ENCODE measurements at regions of chr7 and their contacts with region 1.

Region 1: DNA sequence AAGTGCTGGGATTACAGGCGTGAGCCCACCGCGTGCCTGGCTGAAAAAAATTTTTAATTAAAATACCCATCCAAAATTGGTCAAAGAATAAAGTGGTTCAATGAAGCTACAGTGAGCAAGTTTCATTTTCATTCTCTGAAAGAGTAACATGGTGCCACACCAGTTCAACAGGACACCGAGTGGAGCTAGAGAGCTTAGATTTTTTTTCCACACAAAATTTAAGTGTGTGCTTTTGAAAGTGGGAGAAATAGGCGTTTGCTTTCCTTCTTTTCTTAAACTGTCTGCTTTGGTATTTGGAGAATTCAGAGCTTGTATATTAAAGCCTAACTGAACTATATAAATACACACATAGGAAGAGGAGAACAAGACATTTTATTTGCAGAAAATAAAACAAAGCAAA is 43.4 kb downstream of the BPGM start:
- DNase-seq: no peak
- H3K4me3 ChIP-seq: no peak overlapping the region
- H3K27me3 ChIP-seq: no peaks in the 10 kb centered on the region
- CTCF ChIP-seq: peak; percentile 66

Region 2: GRCh38 chr7:134364619-134365037 is 325.4 kb before region 1 on chr7:
- CTCF ChIA-PET with region 1: no interaction called
- POLR2A ChIA-PET with region 1: no interaction called
- DNase-seq: no peak
- H3K4me3 ChIP-seq: no peak overlapping the region
- H3K27me3 ChIP-seq: no peaks in the 10 kb centered on the region
- CTCF ChIP-seq: no peak

Region 3: DNA sequence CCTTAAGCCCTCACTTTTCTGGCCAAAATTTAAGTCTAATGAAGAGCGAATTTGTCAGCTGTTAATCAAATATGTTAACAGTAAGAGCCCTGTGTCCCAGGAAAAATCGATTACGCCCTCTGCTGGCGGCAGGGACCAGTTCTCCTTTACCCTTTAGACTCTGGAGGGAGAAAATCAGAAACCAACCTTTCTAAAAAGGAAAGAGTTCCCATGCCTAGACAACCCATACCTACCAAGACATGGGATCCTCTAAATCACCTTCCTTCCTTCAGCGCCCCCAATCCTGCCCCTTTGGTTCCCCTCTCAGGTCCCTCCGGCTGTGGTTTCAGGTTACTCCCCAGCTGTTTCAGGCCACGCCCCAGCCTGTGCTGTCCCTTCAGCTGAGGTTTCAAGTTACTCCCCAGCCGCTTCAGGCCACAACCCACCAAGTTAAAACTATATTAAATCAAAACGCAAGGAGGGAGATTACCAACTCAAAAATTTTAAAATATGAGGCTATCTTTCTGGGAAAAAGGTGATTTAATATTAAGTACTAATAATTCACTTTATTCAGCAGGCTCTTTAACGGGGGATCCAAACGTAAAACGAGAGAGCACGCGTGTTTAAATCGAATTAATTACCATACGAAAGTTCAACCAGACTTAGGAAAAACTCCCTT is 142.5 kb before region 1 on chr7:
- CTCF ChIA-PET with region 1: no interaction called
- POLR2A ChIA-PET with region 1: no interaction called
- DNase-seq: no peak
- H3K4me3 ChIP-seq: peak overlapping the region; percentile 35
- H3K27me3 ChIP-seq: peaks cover 8% of the 10 kb centered on the region
- CTCF ChIP-seq: peak; percentile 89

Region 4: DNA sequence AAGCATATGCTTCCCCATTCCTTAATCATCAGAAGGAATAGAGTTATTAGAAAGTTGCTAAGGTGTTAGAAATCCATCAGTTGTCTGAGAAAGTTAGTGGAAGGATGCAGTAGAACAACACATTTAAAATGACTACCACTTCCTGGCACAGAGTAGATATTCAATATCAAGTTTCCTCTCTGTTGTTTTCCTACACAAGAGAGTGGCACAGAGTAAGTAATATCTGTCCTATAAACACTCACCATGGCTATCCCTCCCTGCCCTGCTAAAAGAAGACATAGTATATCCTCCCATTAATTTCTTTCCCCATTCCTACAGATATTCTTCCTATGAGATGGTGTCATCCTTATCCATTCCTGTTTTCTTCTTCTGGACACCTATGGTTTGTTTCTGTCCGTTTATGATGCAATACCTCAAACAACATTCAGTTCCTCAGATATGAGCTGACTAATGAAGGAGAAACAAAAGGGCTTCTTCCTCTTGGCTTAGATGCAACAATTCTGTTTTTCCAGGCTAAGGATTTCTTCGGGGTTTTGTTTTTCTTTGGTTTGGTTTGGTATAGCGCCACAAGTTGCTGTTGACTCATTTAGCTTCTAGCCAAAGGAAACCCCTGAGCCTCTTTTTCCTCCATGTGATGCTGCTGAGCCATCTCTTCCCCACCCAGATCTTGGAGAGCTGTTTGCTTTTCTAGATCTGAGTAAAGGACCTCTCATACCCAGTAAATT is 76.2 kb before region 1 on chr7:
- CTCF ChIA-PET with region 1: no interaction called
- POLR2A ChIA-PET with region 1: no interaction called
- DNase-seq: peak; percentile 97
- H3K4me3 ChIP-seq: no peak overlapping the region
- H3K27me3 ChIP-seq: no peaks in the 10 kb centered on the region
- CTCF ChIP-seq: peak; percentile 14; the same call in 1 of the 2 replicates

Region 5: DNA sequence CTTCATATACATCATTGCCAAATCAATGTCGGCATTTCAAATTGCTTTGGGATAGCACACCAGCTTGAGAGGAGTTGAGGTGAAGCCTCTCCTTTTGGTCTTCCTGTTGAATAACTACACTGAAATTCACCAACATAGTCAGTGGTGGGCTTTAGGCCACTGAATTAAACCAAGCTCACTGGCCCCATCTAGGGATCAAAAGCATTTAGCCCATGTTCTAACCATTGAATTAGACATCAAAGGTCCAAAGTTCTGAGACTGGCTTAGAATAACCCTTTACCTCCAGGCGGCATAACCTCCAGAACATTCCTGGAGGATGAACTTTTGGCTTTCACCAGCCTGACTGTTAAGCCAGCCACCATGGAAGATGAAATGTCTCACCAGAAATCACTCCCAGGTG is 11.3 kb after region 1 on chr7:
- CTCF ChIA-PET with region 1: interaction called, 28 read pairs
- POLR2A ChIA-PET with region 1: interaction called, 3 read pairs
- DNase-seq: no peak
- H3K4me3 ChIP-seq: no peak overlapping the region
- H3K27me3 ChIP-seq: no peaks in the 10 kb centered on the region
- CTCF ChIP-seq: peak; percentile 14; the same call in 1 of the 2 replicates

Region 6: GRCh38 chr7:134730411-134730829 is 40.4 kb after region 1 on chr7:
- CTCF ChIA-PET with region 1: interaction called, 13 read pairs
- POLR2A ChIA-PET with region 1: interaction called, 5 read pairs
- DNase-seq: peak; percentile 56
- H3K4me3 ChIP-seq: no peak overlapping the region
- H3K27me3 ChIP-seq: no peaks in the 10 kb centered on the region
- CTCF ChIP-seq: no peak

Region 7: GRCh38 chr7:134755401-134756022 is 65.5 kb after region 1 on chr7:
- CTCF ChIA-PET with region 1: interaction called, 50 read pairs
- POLR2A ChIA-PET with region 1: interaction called, 3 read pairs
- DNase-seq: no peak
- H3K4me3 ChIP-seq: no peak overlapping the region
- H3K27me3 ChIP-seq: no peaks in the 10 kb centered on the region
- CTCF ChIP-seq: peak; percentile 79

Region 8: DNA sequence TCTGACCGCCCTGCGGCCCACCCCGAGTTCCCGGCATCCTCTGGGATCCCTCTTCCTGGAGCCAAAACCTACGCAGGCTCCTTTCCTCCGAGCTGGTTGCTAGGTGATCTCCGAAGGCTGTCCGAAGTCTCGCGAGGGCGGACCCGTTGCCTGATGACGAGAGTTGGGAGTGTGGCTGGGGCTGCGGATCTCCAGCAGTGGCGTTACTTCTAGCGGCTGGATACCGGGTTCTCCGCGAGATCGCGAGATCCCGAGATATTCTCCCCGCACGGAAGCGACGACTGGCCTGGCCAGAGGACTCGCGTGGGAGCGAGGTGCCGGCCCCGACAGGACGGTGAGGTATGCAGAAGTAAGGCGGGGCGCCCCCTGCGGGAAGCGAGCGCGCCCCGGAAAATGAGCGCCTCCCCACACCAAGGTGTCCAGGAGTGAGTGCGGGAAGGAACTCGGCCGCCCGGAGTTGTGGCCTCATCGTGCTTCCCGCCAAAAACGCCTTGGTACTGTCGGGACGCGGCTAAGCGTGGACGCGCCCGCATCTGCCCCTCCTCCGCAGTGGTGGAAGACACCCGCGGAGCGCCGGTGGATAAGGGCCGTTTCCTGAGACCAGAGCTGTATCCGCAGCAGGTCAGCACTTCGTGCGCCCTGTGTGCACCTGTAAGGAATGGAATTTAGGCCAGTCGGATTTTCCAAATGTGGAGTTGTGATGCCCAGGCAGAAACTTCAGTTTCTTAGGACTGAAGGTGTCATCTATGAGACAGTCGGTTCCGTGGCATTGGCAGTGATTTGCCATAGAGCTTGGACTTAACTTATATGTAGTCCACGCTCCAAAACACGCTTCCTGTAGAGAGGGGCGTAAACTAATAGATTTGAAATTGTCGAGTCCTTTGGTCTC is 296.6 kb after region 1 on chr7 and contains the start of gene AGBL3:
- CTCF ChIA-PET with region 1: interaction called, 21 read pairs
- POLR2A ChIA-PET with region 1: no interaction called
- DNase-seq: peak; percentile 86
- H3K4me3 ChIP-seq: peak within 1 kb of the TSS; percentile 57
- H3K27me3 ChIP-seq: no peaks in the 10 kb centered on the region
- CTCF ChIP-seq: peak; percentile 79
- polyA plus RNA-seq, gene AGBL3: 0.32 and 0.80 TPM in 2 replicates

Region 9: GRCh38 chr7:135274495-135275268 is 584.7 kb after region 1 on chr7:
- CTCF ChIA-PET with region 1: interaction called, 28 read pairs
- POLR2A ChIA-PET with region 1: no interaction called
- DNase-seq: no peak
- H3K4me3 ChIP-seq: no peak overlapping the region
- H3K27me3 ChIP-seq: peaks cover 1% of the 10 kb centered on the region; the same call in 1 of the 2 replicates
- CTCF ChIP-seq: peak; percentile 79